ENCODE measurements at regions of chr18 and their contacts with region 1.

Region 1: GRCh38 chr18:24878289-24878688 is 417.9 kb downstream of the HRH4 start:
- DNase-seq: peak; percentile 14
- H3K4me3 ChIP-seq: no peak overlapping the region
- H3K27ac ChIP-seq: no peak overlapping the region
- H3K4me1 ChIP-seq: no peaks in the 10 kb centered on the region
- H3K27me3 ChIP-seq: no peaks in the 10 kb centered on the region
- CTCF ChIP-seq: peak in 3 of 4 experiments; percentile 32 to 59 (median 34)
- POLR2A ChIP-seq: no peak

Region 2: GRCh38 chr18:24518596-24518995 is 359.7 kb before region 1 on chr18:
- intact Hi-C with region 1: no loop called
- DNase-seq: no peak
- H3K4me3 ChIP-seq: no peak overlapping the region
- H3K27ac ChIP-seq: no peak overlapping the region
- H3K4me1 ChIP-seq: no peaks in the 10 kb centered on the region
- H3K27me3 ChIP-seq: no peaks in the 10 kb centered on the region
- CTCF ChIP-seq: no peak
- POLR2A ChIP-seq: no peak

Region 3: DNA sequence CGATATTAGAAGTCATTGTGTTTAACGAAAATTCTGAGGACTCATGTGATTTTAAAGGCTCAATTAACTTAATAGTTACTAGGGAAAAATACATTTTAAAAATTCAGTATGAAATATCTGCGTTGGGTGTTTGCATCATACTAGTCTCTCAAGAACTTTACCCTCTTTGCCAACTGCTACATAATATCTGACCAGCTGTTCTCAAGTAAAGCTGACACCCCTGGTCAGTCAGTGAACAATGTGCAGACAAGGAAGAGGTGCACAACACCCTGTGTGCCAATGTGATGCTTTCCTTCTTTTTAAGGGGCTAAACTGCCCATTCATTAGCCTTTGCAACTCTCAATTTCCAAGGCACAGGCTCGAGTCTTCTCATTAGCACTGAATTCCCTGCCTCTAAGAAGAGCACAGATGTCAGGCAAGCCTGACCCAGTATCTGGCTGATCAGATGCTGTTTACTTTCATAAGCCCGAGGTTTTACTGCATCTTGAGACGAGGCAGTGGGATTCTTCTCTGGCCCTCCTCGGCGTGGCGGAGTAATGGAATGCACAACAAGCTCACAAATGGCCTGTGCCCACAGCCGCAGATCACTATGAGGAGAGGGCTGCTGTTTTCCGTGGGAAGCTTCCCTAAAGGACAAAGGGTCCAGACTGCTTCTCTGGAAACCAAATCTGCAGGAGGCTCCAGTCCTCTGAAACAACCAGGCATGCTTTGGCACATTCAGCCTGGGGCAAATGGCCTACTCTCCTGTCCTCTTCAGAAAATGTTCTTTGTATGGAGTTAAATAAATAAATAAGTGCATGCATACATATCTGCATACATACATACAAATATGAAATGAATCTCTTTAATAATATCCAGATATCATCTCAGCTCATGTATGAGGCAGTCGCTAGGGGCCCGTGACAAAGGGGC is 233.3 kb after region 1 on chr18:
- intact Hi-C with region 1: no loop called
- DNase-seq: no peak
- H3K4me3 ChIP-seq: no peak overlapping the region
- H3K27ac ChIP-seq: no peak overlapping the region
- H3K4me1 ChIP-seq: no peaks in the 10 kb centered on the region
- H3K27me3 ChIP-seq: no peaks in the 10 kb centered on the region
- CTCF ChIP-seq: no peak
- POLR2A ChIP-seq: no peak

Region 4: DNA sequence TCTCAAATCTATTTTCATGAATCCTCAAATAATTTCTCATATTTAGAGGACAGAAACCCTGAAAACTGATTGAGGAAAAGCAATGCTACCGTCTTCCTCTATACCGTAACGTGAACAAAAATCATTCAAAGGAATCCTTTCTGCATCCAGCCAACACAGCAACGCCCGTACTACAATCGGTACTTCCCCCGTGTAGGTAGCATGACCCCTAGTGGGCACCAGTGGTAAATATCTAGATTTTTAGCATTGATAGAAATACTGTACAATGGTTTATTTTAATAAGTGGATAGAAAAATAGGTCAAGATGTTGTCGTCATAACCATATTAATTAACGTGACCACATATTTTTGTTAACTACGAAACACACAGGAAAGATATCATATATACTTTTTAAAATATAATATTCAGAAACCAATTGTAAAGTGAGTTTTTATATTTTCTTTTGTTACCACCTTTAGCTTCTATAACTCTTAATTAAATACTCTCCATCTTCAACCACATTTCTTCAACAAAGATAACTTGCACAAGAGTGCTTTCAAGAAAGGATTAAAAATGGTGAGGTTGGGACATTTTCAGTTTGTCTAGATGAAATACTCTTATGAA is 1018.0 kb after region 1 on chr18:
- intact Hi-C with region 1: loop called (anchors 5 kb)
- DNase-seq: peak; percentile 14
- H3K4me3 ChIP-seq: no peak overlapping the region
- H3K27ac ChIP-seq: no peak overlapping the region
- H3K4me1 ChIP-seq: no peaks in the 10 kb centered on the region
- H3K27me3 ChIP-seq: no peaks in the 10 kb centered on the region
- CTCF ChIP-seq: peak in 3 of 4 experiments; percentile 50 to 58 (median 56)
- POLR2A ChIP-seq: no peak